ENCODE measurements at regions of chr2 and their contacts with region 1.

Region 1: GRCh38 chr2:64330281-64331113 is 123.5 kb upstream of the LGALSL start:
- DNase-seq: peak; percentile 64 to 83 (median 73)
- H3K4me3 ChIP-seq: no peak overlapping the region
- H3K4me3 Mint-ChIP-seq: peak overlapping the region; percentile 1 to 75 (median 37)
- H3K27ac ChIP-seq: no peak overlapping the region
- H3K27ac Mint-ChIP-seq: peak overlapping the region in 6 of 8 donors; percentile 5 to 94 (median 78)
- H3K4me1 ChIP-seq: peaks cover 40% of the 10 kb centered on the region
- H3K4me1 Mint-ChIP-seq: peaks cover 32 to 37% (median 35%) of the 10 kb centered on the region in 3 donors
- H3K27me3 ChIP-seq: no peaks in the 10 kb centered on the region
- H3K27me3 Mint-ChIP-seq: peaks cover 0 to 1% of the 10 kb centered on the region in 2 donors

Region 2: DNA sequence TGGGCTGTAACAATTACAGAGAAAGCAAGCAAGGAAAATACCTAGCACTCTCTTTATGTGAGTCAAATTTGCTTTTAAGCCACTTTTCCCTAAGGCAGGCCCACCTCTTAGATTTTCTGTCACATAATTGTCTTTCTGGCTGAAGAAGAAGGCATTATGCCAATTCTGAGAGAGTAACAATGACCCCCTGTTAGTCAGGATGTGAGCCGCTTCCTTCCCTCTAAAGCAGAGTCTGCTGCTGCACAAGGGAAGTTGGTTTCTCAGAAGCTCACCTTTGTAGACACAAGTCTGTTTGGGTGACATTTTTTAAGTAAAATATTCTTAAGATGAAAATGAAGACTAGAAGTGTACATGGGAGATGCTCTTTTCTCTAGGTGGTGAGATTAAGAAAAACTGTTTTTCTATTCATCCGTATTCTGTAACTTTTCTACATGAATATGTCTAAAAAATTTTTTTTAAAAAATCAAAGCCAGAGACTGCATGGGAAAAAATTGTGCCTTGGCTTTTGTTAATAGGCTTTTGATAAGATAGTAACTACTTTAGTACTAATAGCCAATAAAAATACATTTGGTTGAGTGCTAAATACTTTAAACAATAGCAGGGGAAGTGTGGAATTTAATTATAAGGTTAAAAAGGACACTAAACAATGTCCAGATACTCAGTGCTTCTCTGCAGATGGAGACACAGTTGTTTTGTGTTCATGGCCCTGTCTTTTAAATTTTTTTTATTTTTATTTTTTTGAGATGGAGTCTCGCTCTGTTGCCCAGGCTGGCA is 277.8 kb before region 1 on chr2:
- CTCF ChIA-PET with region 1: interaction called, 102 read pairs
- POLR2A ChIA-PET with region 1: interaction called, 5 read pairs
- DNase-seq: peak in 1 of 5 donors; percentile 29
- H3K4me3 ChIP-seq: no peak overlapping the region
- H3K4me3 Mint-ChIP-seq: no peak overlapping the region
- H3K27ac ChIP-seq: no peak overlapping the region
- H3K27ac Mint-ChIP-seq: peak overlapping the region in 1 of 8 donors; percentile 61
- H3K4me1 ChIP-seq: peaks cover 34% of the 10 kb centered on the region
- H3K4me1 Mint-ChIP-seq: peaks cover 10 to 13% (median 11%) of the 10 kb centered on the region in 3 donors
- H3K27me3 ChIP-seq: no peaks in the 10 kb centered on the region
- H3K27me3 Mint-ChIP-seq: no peaks in the 10 kb centered on the region

Region 3: DNA sequence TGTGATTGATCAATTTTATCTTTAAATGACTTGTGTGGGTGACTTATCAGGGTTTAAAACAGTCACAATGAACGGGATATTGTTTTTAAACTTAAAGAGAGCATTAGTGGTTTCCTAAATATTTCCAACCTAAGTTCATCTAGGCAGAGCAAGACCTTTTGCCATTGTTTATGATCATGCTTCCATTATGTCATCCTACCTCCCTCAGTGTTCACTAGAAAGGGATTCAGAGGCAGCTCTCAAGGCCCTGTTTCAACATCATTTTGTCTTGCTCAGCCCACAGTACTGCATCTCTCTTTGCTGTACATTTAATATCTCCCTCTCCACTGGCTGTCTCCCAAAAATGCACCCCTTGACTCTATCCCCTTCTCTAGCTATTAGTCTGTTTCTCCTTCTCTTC is 164.8 kb before region 1 on chr2:
- CTCF ChIA-PET with region 1: no interaction called
- POLR2A ChIA-PET with region 1: no interaction called
- DNase-seq: no peak
- H3K4me3 ChIP-seq: no peak overlapping the region
- H3K4me3 Mint-ChIP-seq: no peak overlapping the region
- H3K27ac ChIP-seq: no peak overlapping the region
- H3K27ac Mint-ChIP-seq: no peak overlapping the region
- H3K4me1 ChIP-seq: no peaks in the 10 kb centered on the region
- H3K4me1 Mint-ChIP-seq: no peaks in the 10 kb centered on the region
- H3K27me3 ChIP-seq: no peaks in the 10 kb centered on the region
- H3K27me3 Mint-ChIP-seq: no peaks in the 10 kb centered on the region

Region 4: GRCh38 chr2:64482765-64483504 is 152.4 kb after region 1 on chr2:
- CTCF ChIA-PET with region 1: interaction called, 184 read pairs
- POLR2A ChIA-PET with region 1: interaction called, 4 read pairs
- DNase-seq: no peak
- H3K4me3 ChIP-seq: no peak overlapping the region
- H3K4me3 Mint-ChIP-seq: no peak overlapping the region
- H3K27ac ChIP-seq: no peak overlapping the region
- H3K27ac Mint-ChIP-seq: peak overlapping the region in 1 of 8 donors; percentile 51
- H3K4me1 ChIP-seq: no peaks in the 10 kb centered on the region
- H3K4me1 Mint-ChIP-seq: peaks cover 0 to 2% (median 0%) of the 10 kb centered on the region in 3 donors
- H3K27me3 ChIP-seq: no peaks in the 10 kb centered on the region
- H3K27me3 Mint-ChIP-seq: peaks cover 2 to 10% of the 10 kb centered on the region in 2 donors

Region 5: DNA sequence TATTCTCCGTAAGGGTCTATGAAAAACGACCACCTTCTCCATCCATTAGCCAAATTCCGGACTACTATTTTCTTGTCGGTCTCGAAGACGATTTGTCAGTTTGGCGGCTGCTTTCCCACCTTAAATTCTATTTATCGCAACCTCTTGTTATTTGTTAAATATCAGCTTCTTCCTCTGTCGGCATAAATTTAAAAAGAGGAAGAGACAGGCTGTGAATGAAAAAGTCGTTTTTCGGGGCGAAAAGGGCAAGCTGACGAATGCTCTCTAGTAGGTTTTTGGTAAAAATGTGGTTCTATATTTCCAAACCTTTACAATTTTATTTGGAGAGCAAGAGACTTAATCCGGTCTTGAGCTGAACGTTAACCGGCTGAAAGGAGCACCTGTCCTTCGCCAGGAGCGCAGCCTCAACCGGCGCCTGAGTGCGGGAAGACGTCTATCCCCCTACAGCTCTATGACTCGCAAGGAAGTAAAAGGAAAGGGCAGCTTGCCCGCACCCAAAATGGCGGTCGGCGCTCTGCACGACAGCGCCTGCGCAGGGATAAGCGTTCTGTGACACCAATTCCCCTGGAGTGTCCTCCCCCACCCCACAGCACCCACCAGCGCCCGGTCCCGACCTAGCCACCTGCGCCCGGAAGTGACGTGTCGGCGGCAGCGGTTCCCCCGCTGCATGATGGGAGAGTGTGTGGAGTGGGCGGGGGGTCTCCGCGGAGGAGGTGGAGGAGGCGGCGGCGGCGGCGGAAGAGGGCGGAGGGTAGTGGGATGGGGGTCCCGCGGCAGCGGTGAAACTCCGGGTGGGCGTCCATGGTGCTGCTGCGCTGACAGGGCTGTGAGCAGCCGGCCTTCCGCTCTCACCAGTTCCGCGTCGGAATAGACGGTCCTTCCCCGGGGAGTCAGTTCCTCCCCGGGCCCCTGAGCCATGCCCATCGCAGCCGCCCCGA is 193.4 kb after region 1 on chr2 and contains the start of gene AFTPH:
- CTCF ChIA-PET with region 1: interaction called, 15 read pairs
- POLR2A ChIA-PET with region 1: interaction called, 7 read pairs
- DNase-seq: peak; percentile 99 to 100 (median 100)
- H3K4me3 ChIP-seq: peak within 1 kb of the TSS; percentile 79
- H3K4me3 Mint-ChIP-seq: peak within 1 kb of the TSS; percentile 89 to 100 (median 98)
- H3K27ac ChIP-seq: peak within 1 kb of the TSS; percentile 77
- H3K27ac Mint-ChIP-seq: peak within 1 kb of the TSS; percentile 84 to 100 (median 98)
- H3K4me1 ChIP-seq: peaks cover 30% of the 10 kb centered on the region
- H3K4me1 Mint-ChIP-seq: peaks cover 41 to 48% (median 46%) of the 10 kb centered on the region in 3 donors
- H3K27me3 ChIP-seq: no peaks in the 10 kb centered on the region
- H3K27me3 Mint-ChIP-seq: peaks cover 3% of the 10 kb centered on the region in 2 donors
- total RNA-seq, gene AFTPH: 41.4 to 44.2 TPM

Region 6: DNA sequence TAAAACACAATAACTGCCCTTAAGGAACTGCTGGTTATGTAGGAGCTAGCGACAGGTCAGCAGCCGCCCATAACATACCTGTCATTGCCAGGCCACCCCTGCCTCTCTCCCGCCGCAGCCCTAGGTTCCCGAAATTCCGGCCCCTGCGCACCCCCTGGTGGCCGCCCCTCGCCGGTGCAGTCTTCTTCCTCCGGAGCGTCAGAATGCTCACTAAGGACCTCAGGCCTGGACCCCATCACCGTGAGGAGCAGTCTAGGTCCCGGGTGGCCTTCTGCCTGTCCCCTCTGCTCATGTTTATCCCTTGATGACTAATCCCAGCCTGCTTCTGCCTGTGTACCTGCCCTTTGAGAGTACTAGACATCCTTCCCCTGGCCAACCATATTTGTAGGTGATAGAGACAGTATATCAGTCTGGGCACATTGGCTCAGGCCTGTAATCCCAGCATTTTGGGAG is 543.0 kb after region 1 on chr2:
- CTCF ChIA-PET with region 1: interaction called, 21 read pairs
- POLR2A ChIA-PET with region 1: no interaction called
- DNase-seq: peak; percentile 63 to 79 (median 69)
- H3K4me3 ChIP-seq: no peak overlapping the region
- H3K4me3 Mint-ChIP-seq: peak overlapping the region in 3 of 7 donors; percentile 57 to 75 (median 61)
- H3K27ac ChIP-seq: no peak overlapping the region
- H3K27ac Mint-ChIP-seq: peak overlapping the region in 3 of 8 donors; percentile 1 to 83 (median 60)
- H3K4me1 ChIP-seq: peaks cover 7% of the 10 kb centered on the region
- H3K4me1 Mint-ChIP-seq: peaks cover 6 to 8% (median 7%) of the 10 kb centered on the region in 3 donors
- H3K27me3 ChIP-seq: no peaks in the 10 kb centered on the region
- H3K27me3 Mint-ChIP-seq: peaks cover 6% of the 10 kb centered on the region in 2 donors